CD8-positive, alpha-beta T cell (primary cell): ENCODE measurements at regions of chr6 and their contacts with region 1.

Region 1: DNA sequence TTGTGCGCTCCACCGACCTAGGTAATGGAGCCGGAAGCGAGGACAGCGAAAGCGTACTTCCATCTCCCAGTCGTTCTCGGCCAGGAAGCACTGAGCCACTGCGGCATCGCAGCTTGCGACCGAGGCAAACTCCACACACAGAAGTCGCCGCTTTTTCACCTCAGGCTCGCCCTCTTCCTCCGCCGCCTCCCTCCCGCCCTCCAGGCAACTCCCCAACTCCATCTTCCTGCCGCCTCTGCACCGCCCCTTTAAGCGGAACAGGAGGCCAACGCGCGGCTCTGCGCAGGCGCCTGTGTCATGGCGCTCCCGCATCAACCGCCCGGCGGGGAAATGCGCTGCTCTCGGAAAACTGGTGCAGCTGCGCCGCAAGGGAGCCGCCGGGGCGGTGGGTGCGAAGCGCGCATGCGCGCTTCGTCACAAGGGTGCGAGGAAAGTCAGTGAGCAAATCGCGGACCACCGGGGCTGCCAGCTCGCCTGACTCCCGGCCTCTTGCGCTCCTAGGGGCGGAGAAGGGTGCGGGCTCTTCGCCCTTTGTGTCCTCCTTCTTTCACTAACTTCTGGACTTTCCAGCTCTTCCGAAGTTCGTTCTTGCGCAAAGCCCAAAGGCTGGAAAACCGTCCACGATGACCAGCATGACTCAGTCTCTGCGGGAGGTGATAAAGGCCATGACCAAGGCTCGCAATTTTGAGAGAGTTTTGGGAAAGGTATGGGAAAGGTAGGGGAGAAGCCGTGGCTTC is at the starts of genes ACOT13 and TDP2:
- DNase-seq: peak; percentile 92 to 99 (median 96)
- ATAC-seq: peak; percentile 93
- H3K4me3 ChIP-seq: peak within 1 kb of the TSS; percentile 89 to 94
- H3K4me3 Mint-ChIP-seq: peak within 1 kb of the TSS; percentile 100
- H3K27ac ChIP-seq: peak within 1 kb of the TSS; percentile 80 to 89
- H3K27ac Mint-ChIP-seq: peak within 1 kb of the TSS; percentile 98
- H3K4me1 ChIP-seq: peaks cover 45% of the 10 kb centered on the region
- H3K4me1 Mint-ChIP-seq: peaks cover 63% of the 10 kb centered on the region
- H3K27me3 ChIP-seq: no peaks in the 10 kb centered on the region
- H3K27me3 Mint-ChIP-seq: no peaks in the 10 kb centered on the region
- CTCF ChIP-seq: peak; percentile 54
- total RNA-seq, gene ACOT13: 1.2 to 2.3 TPM
- total RNA-seq, gene TDP2: 60.7 to 63.4 TPM

Region 2: GRCh38 chr6:24494821-24495795 is 171.7 kb before region 1 on chr6 and contains the start of gene ALDH5A1:
- CTCF ChIA-PET with region 1: interaction called, 3 read pairs
- POLR2A ChIA-PET with region 1: interaction called, 9 read pairs
- intact Hi-C with region 1: loop called (anchors 2 to 10 kb)
- DNase-seq: peak; percentile 60 to 91 (median 79)
- ATAC-seq: peak; percentile 84
- H3K4me3 ChIP-seq: peak within 1 kb of the TSS; percentile 62 to 85
- H3K4me3 Mint-ChIP-seq: peak within 1 kb of the TSS; percentile 87
- H3K27ac ChIP-seq: peak within 1 kb of the TSS; percentile 43 to 62
- H3K27ac Mint-ChIP-seq: peak within 1 kb of the TSS; percentile 87
- H3K4me1 ChIP-seq: peaks cover 12% of the 10 kb centered on the region
- H3K4me1 Mint-ChIP-seq: peaks cover 38% of the 10 kb centered on the region
- H3K27me3 ChIP-seq: no peaks in the 10 kb centered on the region
- H3K27me3 Mint-ChIP-seq: no peaks in the 10 kb centered on the region
- CTCF ChIP-seq: no peak
- total RNA-seq, gene ALDH5A1: 4.0 to 4.7 TPM

Region 3: GRCh38 chr6:24646782-24647181 is 20.0 kb before region 1 on chr6:
- CTCF ChIA-PET with region 1: interaction called, 5 read pairs
- POLR2A ChIA-PET with region 1: interaction called, 21 read pairs
- intact Hi-C with region 1: loop called (anchors 1 kb)
- DNase-seq: no peak
- ATAC-seq: no peak
- H3K4me3 ChIP-seq: no peak overlapping the region
- H3K4me3 Mint-ChIP-seq: peak overlapping the region; percentile 81
- H3K27ac ChIP-seq: no peak overlapping the region
- H3K27ac Mint-ChIP-seq: no peak overlapping the region
- H3K4me1 ChIP-seq: peaks cover 9% of the 10 kb centered on the region
- H3K4me1 Mint-ChIP-seq: peaks cover 12% of the 10 kb centered on the region
- H3K27me3 ChIP-seq: peaks cover 0 to 4% of the 10 kb centered on the region in 2 experiments
- H3K27me3 Mint-ChIP-seq: peaks cover 18% of the 10 kb centered on the region
- CTCF ChIP-seq: no peak

Region 4: GRCh38 chr6:24689964-24690363 is 23.2 kb after region 1 on chr6:
- CTCF ChIA-PET with region 1: no interaction called
- POLR2A ChIA-PET with region 1: no interaction called
- intact Hi-C with region 1: loop called in 1 of 2 experiments (anchors 2 kb)
- DNase-seq: no peak
- ATAC-seq: no peak
- H3K4me3 ChIP-seq: no peak overlapping the region
- H3K4me3 Mint-ChIP-seq: no peak overlapping the region
- H3K27ac ChIP-seq: no peak overlapping the region
- H3K27ac Mint-ChIP-seq: no peak overlapping the region
- H3K4me1 ChIP-seq: peaks cover 10% of the 10 kb centered on the region
- H3K4me1 Mint-ChIP-seq: peaks cover 11% of the 10 kb centered on the region
- H3K27me3 ChIP-seq: no peaks in the 10 kb centered on the region
- H3K27me3 Mint-ChIP-seq: no peaks in the 10 kb centered on the region
- CTCF ChIP-seq: no peak

Region 5: DNA sequence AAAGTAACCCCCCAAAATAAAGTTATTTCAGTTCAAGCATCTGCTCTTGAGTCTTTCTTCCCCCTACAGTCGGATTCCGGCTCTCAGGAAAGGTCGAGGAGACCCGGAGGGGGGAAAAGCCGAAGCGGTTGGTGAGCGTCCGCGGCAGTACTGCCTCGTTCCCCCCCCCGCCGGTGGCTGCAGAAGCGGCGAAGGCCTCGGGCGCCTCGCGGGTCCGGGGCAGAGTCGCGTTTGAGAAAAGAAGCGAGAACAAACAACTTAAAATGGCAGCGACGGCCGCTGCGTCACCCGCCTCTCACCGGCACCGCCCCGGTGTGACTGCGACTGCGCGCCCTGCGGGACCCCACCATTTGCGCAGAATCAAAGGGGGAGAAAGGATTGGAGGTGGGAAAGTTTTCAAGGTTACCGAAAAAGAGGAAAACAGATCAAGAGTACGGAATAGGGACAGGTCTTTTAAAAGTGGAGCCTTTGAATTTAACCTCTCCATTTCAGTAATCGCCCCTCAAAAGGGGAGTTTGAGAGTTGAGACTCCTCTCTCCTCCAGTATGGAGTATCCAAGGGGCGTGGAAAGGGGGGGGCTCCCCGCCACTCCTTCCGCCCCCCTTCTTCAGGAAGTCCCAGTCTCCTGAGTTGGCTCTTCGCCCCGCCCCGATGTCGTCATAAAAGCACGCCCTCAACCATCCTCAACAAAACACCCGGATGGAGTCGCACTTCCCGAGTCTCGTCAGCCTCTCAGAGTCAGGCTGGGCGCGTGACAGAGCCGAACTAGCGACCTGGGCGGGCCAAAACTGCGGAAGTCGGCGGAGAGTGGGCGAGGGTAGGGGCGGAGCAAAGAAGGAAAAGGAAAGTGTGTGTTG is 54.0 kb after region 1 on chr6:
- CTCF ChIA-PET with region 1: interaction called, 3 read pairs
- POLR2A ChIA-PET with region 1: interaction called, 28 read pairs
- intact Hi-C with region 1: loop called (anchors 1 kb)
- DNase-seq: peak; percentile 100
- ATAC-seq: peak; percentile 80
- H3K4me3 ChIP-seq: peak overlapping the region; percentile 88 to 99
- H3K4me3 Mint-ChIP-seq: peak overlapping the region; percentile 92
- H3K27ac ChIP-seq: peak overlapping the region; percentile 97 to 100
- H3K27ac Mint-ChIP-seq: peak overlapping the region; percentile 98
- H3K4me1 ChIP-seq: peaks cover 37% of the 10 kb centered on the region
- H3K4me1 Mint-ChIP-seq: peaks cover 41% of the 10 kb centered on the region
- H3K27me3 ChIP-seq: no peaks in the 10 kb centered on the region
- H3K27me3 Mint-ChIP-seq: no peaks in the 10 kb centered on the region
- CTCF ChIP-seq: no peak

Region 6: DNA sequence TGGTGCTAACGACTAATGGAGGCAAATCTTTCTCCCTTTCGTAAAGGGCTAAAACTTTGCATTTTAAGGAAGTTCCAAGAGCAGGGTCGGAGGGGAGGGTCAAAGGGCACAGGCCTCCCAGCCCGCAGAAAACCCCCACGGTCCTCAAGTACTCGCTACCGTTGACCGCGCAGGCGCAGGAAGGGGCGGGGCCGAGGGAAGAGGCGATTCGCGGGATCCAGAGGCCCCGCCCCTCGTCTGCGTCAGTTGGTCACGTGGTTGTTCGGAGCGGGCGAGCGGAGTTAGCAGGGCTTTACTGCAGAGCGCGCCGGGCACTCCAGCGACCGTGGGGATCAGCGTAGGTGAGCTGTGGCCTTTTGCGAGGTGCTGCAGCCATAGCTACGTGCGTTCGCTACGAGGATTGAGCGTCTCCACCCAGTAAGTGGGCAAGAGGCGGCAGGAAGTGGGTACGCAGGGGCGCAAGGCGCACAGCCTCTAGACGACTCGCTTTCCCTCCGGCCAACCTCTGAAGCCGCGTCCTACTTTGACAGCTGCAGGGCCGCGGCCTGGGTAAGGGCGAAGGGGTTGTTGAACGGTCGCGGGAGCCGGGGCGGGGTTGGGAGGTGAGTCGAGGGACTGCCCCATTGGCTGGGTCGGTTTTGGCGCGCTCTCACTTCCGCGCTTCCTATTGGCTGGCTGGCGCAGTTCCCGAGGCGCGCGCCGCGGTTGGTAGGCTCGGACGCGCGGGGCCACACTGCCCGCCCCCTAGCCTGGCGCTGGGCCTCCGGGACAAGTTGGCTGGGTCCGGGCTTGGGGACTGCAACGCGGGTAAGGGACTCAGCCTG is 108.1 kb after region 1 on chr6 and contains the start of gene GMNN:
- CTCF ChIA-PET with region 1: no interaction called
- POLR2A ChIA-PET with region 1: interaction called, 3 read pairs
- intact Hi-C with region 1: loop called in 1 of 2 experiments (anchors 1 kb)
- DNase-seq: peak; percentile 93 to 99 (median 98)
- ATAC-seq: peak; percentile 86
- H3K4me3 ChIP-seq: peak within 1 kb of the TSS; percentile 86 to 94
- H3K4me3 Mint-ChIP-seq: peak within 1 kb of the TSS; percentile 99
- H3K27ac ChIP-seq: peak within 1 kb of the TSS; percentile 83 to 85
- H3K27ac Mint-ChIP-seq: peak within 1 kb of the TSS; percentile 97
- H3K4me1 ChIP-seq: peaks cover 14% of the 10 kb centered on the region
- H3K4me1 Mint-ChIP-seq: peaks cover 22% of the 10 kb centered on the region
- H3K27me3 ChIP-seq: no peaks in the 10 kb centered on the region
- H3K27me3 Mint-ChIP-seq: no peaks in the 10 kb centered on the region
- CTCF ChIP-seq: no peak
- total RNA-seq, gene GMNN: 14.1 to 14.4 TPM

Region 7: DNA sequence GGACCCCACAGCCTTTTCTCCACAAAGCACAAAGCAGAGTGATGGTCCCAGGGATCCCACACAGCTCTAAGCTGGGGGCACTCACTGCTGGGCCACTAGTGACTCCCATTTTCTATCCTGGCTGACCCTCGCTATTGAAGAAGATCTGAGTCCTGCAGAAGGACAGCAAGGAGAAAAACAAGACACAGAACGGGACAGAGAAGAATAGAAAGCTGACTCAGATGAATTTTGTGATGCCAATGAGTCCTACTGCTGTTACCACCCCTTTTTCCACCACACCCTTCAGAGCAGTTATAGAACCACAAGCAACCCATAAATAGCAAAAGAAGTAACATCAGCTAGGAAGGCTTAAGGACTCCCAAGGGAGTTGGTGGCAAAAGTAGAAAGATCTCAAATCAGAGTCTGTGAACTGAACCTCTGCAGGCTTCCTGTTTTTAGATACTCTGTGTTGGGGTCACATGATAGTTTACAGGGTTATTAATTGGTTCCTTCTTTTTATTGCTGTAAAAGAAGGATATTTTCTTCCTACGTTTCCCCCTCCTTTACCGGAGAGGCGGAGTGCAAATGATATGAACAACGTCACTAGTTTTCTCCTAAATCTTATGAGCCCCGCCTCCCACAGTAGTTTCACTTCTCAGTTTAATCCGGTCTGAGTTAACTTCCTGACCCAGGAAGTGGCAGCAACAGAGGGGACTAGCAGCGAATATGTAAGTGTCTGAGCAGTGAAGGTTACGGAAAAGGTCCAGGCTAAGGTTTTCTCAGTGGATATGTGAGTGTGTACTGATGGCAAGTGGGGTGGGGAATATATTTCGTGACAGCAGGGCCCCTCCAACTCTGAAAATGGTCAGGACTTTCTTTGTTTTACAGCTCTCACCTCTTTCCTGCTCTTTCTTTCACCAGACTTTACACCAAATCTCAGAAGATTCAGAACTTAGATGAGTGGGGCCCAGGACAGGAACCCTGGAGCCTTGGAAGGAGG is 1295.6 kb after region 1 on chr6 and contains the start of gene TRIM38:
- CTCF ChIA-PET with region 1: no interaction called
- POLR2A ChIA-PET with region 1: no interaction called
- intact Hi-C with region 1: loop called in 1 of 2 experiments (anchors 2 kb)
- DNase-seq: peak; percentile 50 to 95 (median 77)
- ATAC-seq: peak; percentile 86
- H3K4me3 ChIP-seq: peak within 1 kb of the TSS; percentile 76 to 86
- H3K4me3 Mint-ChIP-seq: peak within 1 kb of the TSS; percentile 95
- H3K27ac ChIP-seq: peak within 1 kb of the TSS; percentile 91 to 95
- H3K27ac Mint-ChIP-seq: peak within 1 kb of the TSS; percentile 98
- H3K4me1 ChIP-seq: peaks cover 64% of the 10 kb centered on the region
- H3K4me1 Mint-ChIP-seq: peaks cover 81% of the 10 kb centered on the region
- H3K27me3 ChIP-seq: no peaks in the 10 kb centered on the region
- H3K27me3 Mint-ChIP-seq: no peaks in the 10 kb centered on the region
- CTCF ChIP-seq: no peak
- total RNA-seq, gene TRIM38: 13.2 to 13.6 TPM